ENCODE measurements at regions of chr17 and their contacts with region 1.

Region 1: DNA sequence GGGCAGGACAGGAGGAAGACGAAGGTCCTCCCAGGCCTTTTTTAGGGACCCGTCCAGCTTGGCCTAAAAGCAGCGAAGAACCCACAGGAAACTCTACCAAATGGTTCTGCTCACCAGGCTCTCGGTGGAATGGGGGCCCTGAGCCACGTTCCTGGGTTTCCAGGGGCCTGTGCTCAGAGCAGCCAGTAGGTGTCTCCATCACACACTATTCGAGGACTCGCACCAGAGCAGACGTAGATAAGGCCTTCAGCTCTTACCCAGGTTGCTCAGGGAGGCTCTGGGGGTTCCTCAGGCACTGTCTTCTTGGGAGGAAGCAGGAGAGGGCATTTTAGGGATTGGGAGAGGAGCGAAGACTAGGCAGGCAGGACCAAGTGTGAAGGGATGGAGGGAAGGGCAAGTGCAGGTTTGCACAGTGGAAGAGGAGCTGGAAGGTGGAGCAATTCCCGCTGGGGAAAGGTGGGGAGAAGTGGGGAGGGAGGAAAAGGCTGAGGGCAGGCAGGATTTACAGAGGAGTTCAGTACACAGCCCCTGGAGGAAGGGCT is 157.1 kb downstream of the RGS9 start:
- DNase-seq: no peak
- H3K4me3 ChIP-seq: no peak overlapping the region
- H3K27ac ChIP-seq: no peak overlapping the region
- H3K4me1 ChIP-seq: peaks cover 0 to 10% (median 0%) of the 10 kb centered on the region in 3 donors
- H3K27me3 ChIP-seq: no peaks in the 10 kb centered on the region
- CTCF ChIP-seq: peak; percentile 33 to 76 (median 66)
- POLR2A ChIP-seq: no peak

Region 2: DNA sequence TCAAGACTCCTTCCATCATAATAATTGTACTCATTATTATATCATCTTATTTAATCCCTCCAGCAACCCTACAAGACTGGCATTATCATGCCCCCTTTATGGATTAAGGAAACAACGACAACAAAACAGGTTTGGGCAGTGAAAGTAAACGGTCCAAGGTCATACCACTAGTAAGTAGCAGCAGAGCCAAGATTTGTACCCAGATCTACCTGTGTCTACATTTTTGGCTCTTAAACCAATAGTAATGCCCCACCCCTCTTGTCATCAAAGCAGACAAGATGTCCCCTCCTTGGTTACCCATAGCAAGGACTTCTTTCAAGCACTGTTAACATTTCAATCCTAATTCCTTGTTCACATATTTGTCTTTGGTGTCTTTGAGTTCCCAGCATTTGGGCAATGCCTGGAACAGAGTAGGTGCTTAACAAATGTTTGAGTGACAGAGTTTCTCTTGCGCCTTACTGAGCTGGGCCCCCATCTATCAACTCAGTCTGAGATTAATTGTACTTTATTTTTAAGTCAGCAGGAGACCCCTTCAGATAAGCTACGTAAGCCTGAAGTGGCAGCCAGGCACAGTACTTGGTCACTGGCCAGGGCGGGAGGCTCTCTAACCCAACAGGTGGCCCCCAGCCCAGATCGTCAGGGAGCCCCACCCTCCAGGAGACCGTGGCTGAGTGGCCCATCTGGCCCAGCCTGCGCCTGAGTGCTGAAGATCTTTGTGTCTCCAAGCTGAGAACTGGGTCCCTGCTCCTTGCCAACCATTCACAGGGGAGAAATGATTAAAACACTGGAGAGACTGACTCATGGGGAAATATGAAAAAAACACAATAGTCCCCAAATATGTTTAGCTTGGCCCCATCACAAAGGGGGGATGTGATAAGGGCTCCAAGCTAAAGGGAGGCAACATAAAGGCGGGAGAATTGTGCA is 191.4 kb after region 1 on chr17:
- intact Hi-C with region 1: no loop called
- DNase-seq: no peak
- H3K4me3 ChIP-seq: no peak overlapping the region
- H3K27ac ChIP-seq: peak overlapping the region in 2 of 4 donors; percentile 56 to 61
- H3K4me1 ChIP-seq: peaks cover 0 to 13% (median 3%) of the 10 kb centered on the region in 3 donors
- H3K27me3 ChIP-seq: no peaks in the 10 kb centered on the region
- CTCF ChIP-seq: no peak
- POLR2A ChIP-seq: no peak

Region 3: DNA sequence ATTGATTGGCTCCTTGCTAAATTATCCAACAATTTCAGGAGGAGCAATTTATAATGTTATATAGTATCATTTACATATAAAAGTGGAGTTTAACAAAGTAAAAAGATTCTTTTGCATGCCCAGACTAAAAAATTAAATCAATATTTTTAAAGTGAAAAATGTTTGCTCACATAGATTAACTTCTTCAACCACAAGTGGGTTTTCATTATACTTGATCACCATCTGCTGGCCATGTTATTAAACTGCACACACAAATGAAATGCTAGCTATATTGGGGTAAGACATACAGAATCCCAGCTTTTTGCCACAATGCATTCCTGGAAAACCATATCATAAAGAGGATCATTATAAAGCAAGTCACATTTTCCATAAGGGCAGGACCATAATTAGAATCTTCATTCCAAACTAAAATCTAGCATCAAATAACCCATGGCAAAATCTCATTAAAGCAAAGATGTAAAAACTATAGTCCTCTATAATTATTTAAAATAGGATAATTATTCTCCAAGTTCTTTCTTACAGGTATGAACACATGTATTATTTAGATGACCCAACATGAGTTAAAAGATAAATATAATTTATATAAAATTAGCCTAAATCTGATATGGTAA is 871.4 kb after region 1 on chr17:
- intact Hi-C with region 1: loop called (anchors 10 kb)
- DNase-seq: no peak
- H3K4me3 ChIP-seq: no peak overlapping the region
- H3K27ac ChIP-seq: no peak overlapping the region
- H3K4me1 ChIP-seq: no peaks in the 10 kb centered on the region
- H3K27me3 ChIP-seq: no peaks in the 10 kb centered on the region
- CTCF ChIP-seq: peak; percentile 47 to 79 (median 65)
- POLR2A ChIP-seq: no peak

Measured in esophagus squamous epithelium (tissue), 5 donors.